Mammary epithelial cell (primary cell): ENCODE measurements at regions of chr12 and their contacts with region 1.

Region 1: GRCh38 chr12:94545935-94546771 is 86.5 kb upstream of the CEP83 start:
- DNase-seq: peak; percentile 65
- H3K4me3 ChIP-seq: no peak overlapping the region
- H3K27ac ChIP-seq: no peak overlapping the region
- H3K4me1 ChIP-seq: peaks cover 5% of the 10 kb centered on the region
- H3K27me3 ChIP-seq: no peaks in the 10 kb centered on the region
- CTCF ChIP-seq: peak; percentile 88 to 95

Region 2: DNA sequence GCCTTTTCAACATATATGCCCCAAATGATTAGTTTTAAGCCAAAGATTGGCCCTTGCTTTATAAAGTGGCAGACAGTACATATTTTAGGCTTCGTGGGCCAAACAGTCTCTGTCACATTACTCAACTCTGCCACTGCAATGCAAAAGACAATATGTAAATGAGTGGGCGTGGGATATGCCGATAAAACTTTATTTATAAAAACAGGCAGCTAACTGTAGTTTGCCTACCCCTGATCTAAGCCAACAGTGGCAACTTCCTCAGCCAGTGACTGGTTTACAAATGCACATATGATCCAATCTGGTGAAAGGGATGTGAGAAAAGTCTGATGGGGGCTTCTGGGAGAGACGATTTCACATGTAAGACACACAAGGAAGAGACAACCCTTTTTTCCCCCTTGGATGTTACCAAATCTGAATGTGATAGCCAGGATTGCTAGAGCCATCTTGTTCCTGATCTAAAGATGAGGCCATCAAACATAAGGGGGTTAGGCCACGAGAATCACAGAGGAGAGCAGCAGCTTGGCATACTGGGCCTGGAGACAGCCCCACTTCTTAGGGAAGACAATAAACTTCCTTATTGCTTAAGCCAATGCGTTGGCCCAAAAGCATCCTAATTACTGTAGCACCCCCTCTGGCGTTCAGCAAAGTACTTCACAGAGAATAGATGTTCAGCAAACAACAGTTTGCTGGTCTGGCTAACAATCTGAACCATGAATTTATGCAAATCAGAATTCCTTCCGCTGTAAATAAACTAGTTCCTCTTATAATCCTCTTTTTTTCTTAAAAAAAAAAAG is 179.4 kb after region 1 on chr12:
- CTCF ChIA-PET with region 1: no interaction called
- dilution Hi-C with region 1: no loop called
- in situ Hi-C with region 1: no loop called
- intact Hi-C with region 1: loop called (anchors 1 kb)
- DNase-seq: peak; percentile 66
- H3K4me3 ChIP-seq: no peak overlapping the region
- H3K27ac ChIP-seq: no peak overlapping the region
- H3K4me1 ChIP-seq: no peaks in the 10 kb centered on the region
- H3K27me3 ChIP-seq: no peaks in the 10 kb centered on the region
- CTCF ChIP-seq: peak; percentile 28 to 61

Region 3: GRCh38 chr12:94875525-94875924 is 329.4 kb after region 1 on chr12:
- CTCF ChIA-PET with region 1: no interaction called
- dilution Hi-C with region 1: no loop called
- in situ Hi-C with region 1: loop called in 1 of 2 experiments (anchors 10 kb)
- intact Hi-C with region 1: loop called (anchors 1 kb)
- DNase-seq: peak; percentile 47
- H3K4me3 ChIP-seq: no peak overlapping the region
- H3K27ac ChIP-seq: no peak overlapping the region
- H3K4me1 ChIP-seq: peaks cover 14% of the 10 kb centered on the region
- H3K27me3 ChIP-seq: peaks cover 24% of the 10 kb centered on the region
- CTCF ChIP-seq: peak in 1 of 2 donors; percentile 37

Region 4: DNA sequence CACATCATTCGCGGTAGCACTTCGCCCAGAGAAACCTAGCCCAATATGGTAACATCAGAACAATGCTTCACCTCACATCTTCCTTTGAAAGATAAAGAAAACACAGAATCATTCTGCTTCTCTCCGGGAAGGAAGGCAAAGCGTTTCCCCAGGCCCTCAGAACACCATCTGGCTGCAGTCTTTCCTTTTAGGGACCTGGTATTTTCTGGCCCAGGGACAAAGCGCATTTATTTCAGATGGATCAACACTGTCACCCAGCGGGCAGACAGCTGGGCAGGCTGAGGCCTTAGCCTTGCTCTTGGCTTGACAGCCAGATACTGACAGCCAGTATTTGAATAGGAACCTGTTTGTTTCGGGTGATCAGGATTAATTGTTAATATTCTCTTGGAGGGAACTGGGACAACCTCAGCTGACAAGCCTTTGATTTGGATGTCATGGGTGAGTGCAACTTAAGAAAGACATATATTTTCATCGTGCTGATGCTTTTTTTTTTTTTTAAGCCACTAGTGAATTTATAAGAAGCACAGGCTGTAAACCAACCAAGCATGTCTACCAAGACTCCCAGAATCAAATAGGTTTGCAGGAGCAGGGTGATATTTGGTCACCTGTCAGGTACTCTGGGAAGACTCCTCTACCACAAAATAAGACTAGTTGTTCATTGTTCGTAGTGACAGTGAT is 790.4 kb after region 1 on chr12:
- CTCF ChIA-PET with region 1: no interaction called
- dilution Hi-C with region 1: no loop called
- in situ Hi-C with region 1: loop called in 1 of 2 experiments (anchors 25 kb)
- intact Hi-C with region 1: loop called (anchors 1 kb)
- DNase-seq: peak; percentile 61
- H3K4me3 ChIP-seq: no peak overlapping the region
- H3K27ac ChIP-seq: no peak overlapping the region
- H3K4me1 ChIP-seq: peaks cover 6% of the 10 kb centered on the region
- H3K27me3 ChIP-seq: no peaks in the 10 kb centered on the region
- CTCF ChIP-seq: peak; percentile 88 to 90

Region 5: DNA sequence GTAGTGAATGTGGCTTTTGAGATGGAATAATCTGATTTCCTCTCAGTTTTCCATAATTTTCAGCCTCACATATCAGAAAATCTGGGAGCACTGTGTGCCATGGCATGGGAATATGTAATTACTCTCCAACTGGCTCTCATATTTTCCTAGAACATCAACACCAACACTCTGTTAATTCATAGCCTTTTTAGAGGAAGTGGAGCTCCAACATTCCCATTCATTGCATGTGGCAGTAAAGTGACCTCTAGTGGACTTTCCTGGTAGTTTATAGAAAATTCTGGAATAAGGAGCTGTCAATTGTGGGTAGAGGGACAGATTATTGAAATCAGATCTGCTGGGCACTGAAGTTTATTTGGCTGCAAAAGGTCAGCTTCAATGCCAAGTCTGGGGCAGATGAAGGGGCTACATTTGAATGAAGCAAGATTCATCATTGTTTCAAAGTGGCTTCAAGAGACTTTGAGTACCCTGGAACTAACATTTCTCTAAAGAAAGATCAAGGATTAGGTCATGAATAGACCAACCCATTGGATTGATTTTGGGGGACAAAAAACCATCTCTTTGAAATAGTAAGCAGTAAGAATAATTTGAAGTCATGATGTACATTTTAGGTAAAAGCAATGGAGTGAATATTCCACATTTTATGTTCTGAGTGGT is 1028.8 kb after region 1 on chr12:
- CTCF ChIA-PET with region 1: no interaction called
- dilution Hi-C with region 1: no loop called
- in situ Hi-C with region 1: no loop called
- intact Hi-C with region 1: loop called (anchors 5 kb)
- DNase-seq: peak; percentile 34
- H3K4me3 ChIP-seq: no peak overlapping the region
- H3K27ac ChIP-seq: no peak overlapping the region
- H3K4me1 ChIP-seq: no peaks in the 10 kb centered on the region
- H3K27me3 ChIP-seq: no peaks in the 10 kb centered on the region
- CTCF ChIP-seq: peak; percentile 64 to 77